Activated CD4-positive, alpha-beta T cell treated with anti-CD3 and anti-CD28 coated beads for 36 hours (primary cell): ENCODE measurements at regions of chr17 and their contacts with region 1.

Region 1: GRCh38 chr17:17591355-17592298 is at the start of gene PEMT:
- DNase-seq: peak; percentile 96
- ATAC-seq: peak; percentile 96
- H3K4me3 Mint-ChIP-seq: peak within 1 kb of the TSS; percentile 92
- H3K27ac Mint-ChIP-seq: peak within 1 kb of the TSS; percentile 95
- H3K4me1 Mint-ChIP-seq: peaks cover 16% of the 10 kb centered on the region
- H3K27me3 Mint-ChIP-seq: no peaks in the 10 kb centered on the region
- total RNA-seq, gene PEMT: 30.4 to 32.3 TPM

Region 2: GRCh38 chr17:17179371-17179827 is 412.2 kb before region 1 on chr17:
- CTCF ChIA-PET with region 1: no interaction called
- POLR2A ChIA-PET with region 1: interaction called, 8 read pairs
- intact Hi-C with region 1: loop called in 1 of 2 experiments (anchors 5 kb)
- DNase-seq: peak; percentile 35
- ATAC-seq: peak; percentile 65
- H3K4me3 Mint-ChIP-seq: peak overlapping the region; percentile 51
- H3K27ac Mint-ChIP-seq: peak overlapping the region; percentile 97
- H3K4me1 Mint-ChIP-seq: peaks cover 93% of the 10 kb centered on the region
- H3K27me3 Mint-ChIP-seq: no peaks in the 10 kb centered on the region

Region 3: GRCh38 chr17:17325228-17325627 is 266.4 kb before region 1 on chr17:
- CTCF ChIA-PET with region 1: no interaction called
- POLR2A ChIA-PET with region 1: interaction called, 11 read pairs
- intact Hi-C with region 1: no loop called
- DNase-seq: no peak
- ATAC-seq: no peak
- H3K4me3 Mint-ChIP-seq: no peak overlapping the region
- H3K27ac Mint-ChIP-seq: no peak overlapping the region
- H3K4me1 Mint-ChIP-seq: no peaks in the 10 kb centered on the region
- H3K27me3 Mint-ChIP-seq: no peaks in the 10 kb centered on the region

Region 4: GRCh38 chr17:17561408-17562145 is 30.1 kb before region 1 on chr17:
- CTCF ChIA-PET with region 1: no interaction called
- POLR2A ChIA-PET with region 1: no interaction called
- intact Hi-C with region 1: no loop called
- DNase-seq: no peak
- ATAC-seq: no peak
- H3K4me3 Mint-ChIP-seq: no peak overlapping the region
- H3K27ac Mint-ChIP-seq: no peak overlapping the region
- H3K4me1 Mint-ChIP-seq: no peaks in the 10 kb centered on the region
- H3K27me3 Mint-ChIP-seq: no peaks in the 10 kb centered on the region

Region 5: GRCh38 chr17:17613708-17614114 is 22.1 kb after region 1 on chr17:
- CTCF ChIA-PET with region 1: interaction called, 11 read pairs
- POLR2A ChIA-PET with region 1: no interaction called
- intact Hi-C with region 1: no loop called
- DNase-seq: peak; percentile 72
- ATAC-seq: peak; percentile 97
- H3K4me3 Mint-ChIP-seq: no peak overlapping the region
- H3K27ac Mint-ChIP-seq: no peak overlapping the region
- H3K4me1 Mint-ChIP-seq: peaks cover 2% of the 10 kb centered on the region
- H3K27me3 Mint-ChIP-seq: no peaks in the 10 kb centered on the region

Region 6: DNA sequence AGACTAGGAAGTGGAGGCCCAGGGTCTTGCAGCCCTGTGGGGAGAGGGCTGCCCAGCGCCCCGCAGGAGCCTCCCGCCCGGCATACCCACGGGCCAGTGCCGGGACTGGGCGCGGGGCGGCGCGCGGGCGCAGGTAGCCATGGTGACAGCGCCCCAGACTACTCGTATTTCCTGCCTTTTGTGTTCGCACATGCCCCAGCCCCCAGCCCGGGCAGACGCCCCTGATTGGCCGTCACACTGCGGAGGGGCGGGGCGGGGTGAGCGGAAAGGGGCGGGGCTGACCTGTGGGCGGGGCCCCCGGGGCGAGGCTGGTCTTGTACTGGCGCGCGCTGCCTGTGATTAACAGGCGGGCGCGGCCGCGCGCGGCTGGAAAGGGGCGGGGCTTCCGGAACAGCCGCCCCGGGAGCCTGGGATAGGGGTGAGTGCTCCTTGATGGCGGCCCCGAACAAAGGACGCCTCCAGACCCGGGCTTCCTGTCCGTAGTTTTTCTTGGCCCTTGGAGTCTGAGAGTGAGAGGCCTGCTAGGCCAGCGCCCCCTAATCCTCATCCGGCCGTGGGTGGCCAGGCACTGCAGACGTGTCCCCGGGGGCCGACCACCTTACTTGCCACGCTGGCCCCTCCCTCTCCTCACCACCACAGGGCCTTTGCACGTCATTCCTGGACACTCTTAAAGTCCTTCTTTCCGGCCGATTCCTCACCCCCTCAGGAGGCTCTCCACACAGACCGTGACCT is 160.6 kb after region 1 on chr17:
- CTCF ChIA-PET with region 1: no interaction called
- POLR2A ChIA-PET with region 1: no interaction called
- intact Hi-C with region 1: loop called in 1 of 2 experiments (anchors 1 kb)
- DNase-seq: peak; percentile 99
- ATAC-seq: peak; percentile 89
- H3K4me3 Mint-ChIP-seq: peak overlapping the region; percentile 85
- H3K27ac Mint-ChIP-seq: peak overlapping the region; percentile 99
- H3K4me1 Mint-ChIP-seq: peaks cover 68% of the 10 kb centered on the region
- H3K27me3 Mint-ChIP-seq: no peaks in the 10 kb centered on the region

Region 7: GRCh38 chr17:18038861-18039534 is 447.4 kb after region 1 on chr17 and contains the starts of genes ATPAF2 and GID4:
- CTCF ChIA-PET with region 1: no interaction called
- POLR2A ChIA-PET with region 1: no interaction called
- intact Hi-C with region 1: loop called (anchors 1 to 2 kb)
- DNase-seq: peak; percentile 100
- ATAC-seq: peak; percentile 91
- H3K4me3 Mint-ChIP-seq: peak within 1 kb of the TSS; percentile 91
- H3K27ac Mint-ChIP-seq: peak within 1 kb of the TSS; percentile 92
- H3K4me1 Mint-ChIP-seq: peaks cover 49% of the 10 kb centered on the region
- H3K27me3 Mint-ChIP-seq: no peaks in the 10 kb centered on the region
- total RNA-seq, gene ATPAF2: 32.9 to 40.3 TPM
- total RNA-seq, gene GID4: 6.7 to 7.7 TPM